ENCODE measurements at regions of chr11 and their contacts with region 1.

Region 1: DNA sequence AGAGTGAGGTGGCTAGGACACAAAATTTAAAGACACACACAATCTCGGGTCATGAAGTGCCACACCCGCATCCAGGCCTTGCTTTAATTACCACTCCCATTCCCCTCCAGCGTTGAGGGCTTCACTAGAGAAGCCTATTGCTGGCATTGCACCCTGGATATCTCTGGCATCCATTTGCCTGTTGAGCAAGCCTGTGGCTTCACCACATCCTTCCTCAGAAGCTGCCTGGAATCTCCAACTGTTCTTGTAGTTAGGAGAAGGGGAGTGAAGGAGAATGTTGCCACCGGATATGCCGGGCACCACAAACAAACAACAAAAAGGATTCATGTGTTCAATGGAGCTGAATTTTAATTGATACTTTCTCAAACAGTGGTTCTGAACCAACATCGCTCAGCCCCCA is 34.4 kb upstream of the RCN1 start:
- DNase-seq: no peak
- CTCF ChIP-seq: no peak

Region 2: GRCh38 chr11:32168924-32169323 is 112.5 kb after region 1 on chr11:
- in situ Hi-C with region 1: loop called (anchors 5 kb)
- DNase-seq: no peak
- CTCF ChIP-seq: no peak

Measured in GM13977 (cell line).